Aorta (tissue), 5 donors: ENCODE measurements at regions of chr20 and their contacts with region 1.

Region 1: GRCh38 chr20:47272893-47273590 is 83.5 kb downstream of the ZMYND8 start:
- DNase-seq: no peak
- ATAC-seq: peak; percentile 85
- H3K4me3 ChIP-seq: no peak overlapping the region
- H3K27ac ChIP-seq: peak overlapping the region; percentile 32 to 88
- H3K4me1 ChIP-seq: peaks cover 2 to 5% of the 10 kb centered on the region in 2 donors
- H3K27me3 ChIP-seq: no peaks in the 10 kb centered on the region

Region 2: GRCh38 chr20:47231382-47232039 is 41.5 kb before region 1 on chr20:
- intact Hi-C with region 1: loop called in 1 of 2 experiments (anchors 5 kb)
- DNase-seq: peak in 1 of 2 donors; percentile 57
- ATAC-seq: peak; percentile 83
- H3K4me3 ChIP-seq: no peak overlapping the region
- H3K27ac ChIP-seq: peak overlapping the region in 1 of 2 donors; percentile 76
- H3K4me1 ChIP-seq: no peaks in the 10 kb centered on the region
- H3K27me3 ChIP-seq: no peaks in the 10 kb centered on the region

Region 3: GRCh38 chr20:47356526-47357295 is 83.7 kb after region 1 on chr20 and contains the start of gene ZMYND8:
- intact Hi-C with region 1: loop called in 1 of 2 experiments (anchors 2 kb)
- DNase-seq: peak; percentile 91 to 93
- ATAC-seq: peak; percentile 79
- H3K4me3 ChIP-seq: no peak within 1 kb of the TSS
- H3K27ac ChIP-seq: peak within 1 kb of the TSS; percentile 91 to 97
- H3K4me1 ChIP-seq: peaks cover 9 to 17% of the 10 kb centered on the region in 2 donors
- H3K27me3 ChIP-seq: no peaks in the 10 kb centered on the region
- total RNA-seq, gene ZMYND8: 19.1 to 27.4 TPM

Region 4: DNA sequence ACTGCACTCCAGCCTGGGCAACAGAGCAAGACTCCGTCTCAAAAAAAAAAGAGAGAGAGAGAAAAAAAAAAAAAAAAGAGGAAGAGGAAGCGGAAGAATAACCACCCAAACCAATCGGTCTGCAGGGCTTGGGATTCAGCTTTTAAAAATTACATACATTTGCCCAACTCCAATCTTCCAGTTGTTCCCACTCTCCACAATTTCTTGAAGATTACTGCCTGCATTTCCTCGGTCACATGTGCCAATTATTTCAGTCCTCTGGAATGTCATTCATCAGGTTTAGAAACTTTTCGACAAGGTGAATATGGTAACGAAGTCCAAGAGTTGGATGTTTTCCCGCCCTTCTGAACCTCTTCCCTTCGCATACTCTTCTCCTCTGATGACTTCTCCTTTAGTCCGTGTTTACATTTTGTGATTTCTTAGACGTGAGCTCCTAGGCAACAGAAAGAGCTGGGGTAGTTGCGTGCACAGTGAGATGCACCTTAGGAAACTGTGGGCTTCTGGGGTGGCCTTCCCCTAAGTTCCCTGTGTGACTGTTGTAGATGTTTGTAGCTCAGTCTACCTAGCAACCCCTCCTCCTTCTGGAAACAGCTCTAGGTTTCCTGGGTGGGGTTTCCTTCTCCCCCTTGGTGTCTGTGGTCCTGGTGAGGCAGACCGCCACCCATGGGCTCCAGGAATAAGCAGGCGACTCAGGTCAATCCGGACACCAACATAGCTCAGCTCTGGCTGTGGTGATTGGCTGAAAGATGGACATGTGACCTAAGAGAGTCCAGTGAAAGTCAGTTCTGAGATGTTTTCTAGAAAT is 165.7 kb after region 1 on chr20:
- intact Hi-C with region 1: no loop called
- DNase-seq: no peak
- ATAC-seq: no peak
- H3K4me3 ChIP-seq: no peak overlapping the region
- H3K27ac ChIP-seq: no peak overlapping the region
- H3K4me1 ChIP-seq: no peaks in the 10 kb centered on the region
- H3K27me3 ChIP-seq: no peaks in the 10 kb centered on the region

Region 5: DNA sequence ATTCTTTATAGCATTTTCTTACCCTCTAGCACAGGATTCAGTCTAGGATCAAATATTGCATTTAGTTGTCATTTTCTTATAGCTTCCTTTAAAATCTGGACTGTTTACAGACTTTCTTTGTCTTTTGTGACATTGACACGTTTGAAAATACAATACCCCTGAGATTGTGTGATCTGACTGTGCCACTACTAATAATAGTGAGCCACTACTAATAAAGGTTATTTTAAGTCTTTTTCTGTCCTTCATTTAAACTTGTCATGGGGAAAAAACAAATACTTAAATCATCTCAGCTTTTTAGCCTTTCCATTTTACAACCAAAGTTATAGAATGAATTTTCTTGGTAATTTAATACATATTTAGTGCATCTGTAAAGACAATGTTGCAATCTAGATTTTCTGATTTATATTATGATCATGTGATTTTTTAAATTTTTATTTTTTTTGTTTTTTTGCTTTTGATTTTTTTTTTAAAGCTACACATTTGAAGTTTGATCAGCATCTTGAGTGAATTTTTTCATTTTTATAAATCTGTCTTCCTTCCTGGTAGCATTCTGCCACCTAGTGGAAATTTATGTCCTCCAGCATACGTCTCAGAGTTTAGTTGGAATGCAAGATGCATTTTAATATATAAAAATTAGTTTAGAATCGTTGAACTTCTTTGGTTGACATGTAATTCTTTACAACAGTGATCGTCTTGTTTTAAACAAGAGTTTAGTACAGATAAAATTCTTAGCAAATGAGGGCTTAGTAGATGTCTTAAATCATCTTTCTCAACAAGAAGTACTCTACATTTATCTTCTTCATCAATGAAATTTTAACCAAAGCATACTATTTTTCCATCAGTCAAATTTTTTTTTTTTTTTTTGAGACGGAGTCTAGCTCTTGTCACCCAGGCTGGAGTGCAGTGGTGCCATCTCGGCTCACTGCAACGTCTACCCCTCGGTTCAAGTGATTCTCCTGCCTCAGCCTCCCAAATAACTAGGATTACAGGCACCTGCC is 348.1 kb after region 1 on chr20:
- intact Hi-C with region 1: loop called in 1 of 2 experiments (anchors 5 kb)
- DNase-seq: no peak
- ATAC-seq: no peak
- H3K4me3 ChIP-seq: no peak overlapping the region
- H3K27ac ChIP-seq: no peak overlapping the region
- H3K4me1 ChIP-seq: peaks cover 0 to 2% of the 10 kb centered on the region in 2 donors
- H3K27me3 ChIP-seq: no peaks in the 10 kb centered on the region